Activated CD8-positive, alpha-beta T cell treated with anti-CD3 and anti-CD28 coated beads for 36 hours (primary cell): ENCODE measurements at regions of chr5 and their contacts with region 1.

Region 1: DNA sequence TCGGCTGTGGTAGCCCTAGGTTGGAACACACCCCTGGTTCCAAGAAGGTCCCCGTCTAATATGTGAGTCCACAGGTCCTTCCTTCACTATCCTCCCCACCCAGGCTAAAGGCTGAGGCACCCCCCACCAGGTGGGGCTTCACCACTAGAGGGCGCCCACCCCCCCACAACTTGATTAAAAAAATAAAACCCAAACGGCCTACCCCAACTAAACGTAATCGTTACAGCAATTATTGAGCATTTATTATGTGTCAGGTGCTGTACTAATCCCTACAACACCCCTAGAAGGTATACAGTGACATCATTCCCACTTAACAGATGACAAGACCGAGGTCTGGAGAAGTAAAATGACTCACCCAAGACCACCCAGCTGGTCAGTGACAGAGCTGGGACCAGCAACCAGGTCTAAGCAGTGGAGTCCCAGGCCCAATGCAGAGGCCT is 65.0 kb downstream of the FGF18 start:
- DNase-seq: peak; percentile 66
- ATAC-seq: peak; percentile 58
- H3K4me3 Mint-ChIP-seq: no peak overlapping the region
- H3K27ac Mint-ChIP-seq: no peak overlapping the region
- H3K4me1 Mint-ChIP-seq: peaks cover 4% of the 10 kb centered on the region
- H3K27me3 Mint-ChIP-seq: peaks cover 8% of the 10 kb centered on the region
- CTCF ChIP-seq: peak; percentile 76

Region 2: GRCh38 chr5:171355302-171355724 is 129.2 kb before region 1 on chr5:
- CTCF ChIA-PET with region 1: no interaction called
- POLR2A ChIA-PET with region 1: no interaction called
- intact Hi-C with region 1: no loop called
- DNase-seq: peak; percentile 78
- ATAC-seq: peak; percentile 89
- H3K4me3 Mint-ChIP-seq: no peak overlapping the region
- H3K27ac Mint-ChIP-seq: peak overlapping the region; percentile 20
- H3K4me1 Mint-ChIP-seq: peaks cover 16% of the 10 kb centered on the region
- H3K27me3 Mint-ChIP-seq: peaks cover 2% of the 10 kb centered on the region
- CTCF ChIP-seq: no peak

Region 3: GRCh38 chr5:171474230-171474813 is 10.2 kb before region 1 on chr5:
- CTCF ChIA-PET with region 1: interaction called, 11 read pairs
- POLR2A ChIA-PET with region 1: no interaction called
- intact Hi-C with region 1: no loop called
- DNase-seq: no peak
- ATAC-seq: no peak
- H3K4me3 Mint-ChIP-seq: no peak overlapping the region
- H3K27ac Mint-ChIP-seq: no peak overlapping the region
- H3K4me1 Mint-ChIP-seq: peaks cover under 1% of the 10 kb centered on the region
- H3K27me3 Mint-ChIP-seq: peaks cover 2% of the 10 kb centered on the region
- CTCF ChIP-seq: no peak